A673 (cell line): ENCODE measurements at regions of chr12 and their contacts with region 1.

Region 1: GRCh38 chr12:11486623-11487444 is 91.5 kb upstream of the PRB2 start:
- DNase-seq: peak; percentile 93
- H3K4me3 ChIP-seq: no peak overlapping the region
- H3K27ac ChIP-seq: no peak overlapping the region
- H3K4me1 ChIP-seq: no peaks in the 10 kb centered on the region
- H3K27me3 ChIP-seq: no peaks in the 10 kb centered on the region
- CTCF ChIP-seq: peak; percentile 99

Region 2: GRCh38 chr12:10771132-10771733 is 715.6 kb before region 1 on chr12:
- CTCF ChIA-PET with region 1: interaction called, 7 read pairs
- POLR2A ChIA-PET with region 1: no interaction called
- intact Hi-C with region 1: loop called (anchors 1 kb)
- DNase-seq: peak; percentile 59
- H3K4me3 ChIP-seq: no peak overlapping the region
- H3K27ac ChIP-seq: no peak overlapping the region
- H3K4me1 ChIP-seq: no peaks in the 10 kb centered on the region
- H3K27me3 ChIP-seq: peaks cover 29% of the 10 kb centered on the region
- CTCF ChIP-seq: peak; percentile 76

Region 3: DNA sequence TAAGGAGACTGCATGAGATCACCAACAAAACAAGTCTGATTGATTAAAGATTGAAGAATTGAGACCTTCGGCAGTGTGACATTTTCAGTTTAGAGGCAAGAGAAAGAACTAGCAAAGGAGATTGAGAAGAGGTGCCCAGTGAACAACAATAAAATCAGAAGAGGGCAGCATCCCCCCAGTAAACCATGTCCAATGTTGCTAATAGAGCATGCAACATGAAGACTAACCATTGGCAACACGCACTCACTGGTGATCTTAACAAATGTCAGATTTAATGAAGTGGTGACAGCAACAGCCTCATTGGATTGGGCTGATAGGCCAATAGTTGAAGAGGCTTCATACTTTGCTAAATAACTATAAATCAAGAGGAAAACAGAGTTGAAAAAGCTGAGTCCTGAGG is 527.0 kb before region 1 on chr12:
- CTCF ChIA-PET with region 1: no interaction called
- POLR2A ChIA-PET with region 1: no interaction called
- intact Hi-C with region 1: loop called (anchors 10 kb)
- DNase-seq: peak; percentile 10
- H3K4me3 ChIP-seq: no peak overlapping the region
- H3K27ac ChIP-seq: no peak overlapping the region
- H3K4me1 ChIP-seq: no peaks in the 10 kb centered on the region
- H3K27me3 ChIP-seq: no peaks in the 10 kb centered on the region
- CTCF ChIP-seq: peak; percentile 32

Region 4: DNA sequence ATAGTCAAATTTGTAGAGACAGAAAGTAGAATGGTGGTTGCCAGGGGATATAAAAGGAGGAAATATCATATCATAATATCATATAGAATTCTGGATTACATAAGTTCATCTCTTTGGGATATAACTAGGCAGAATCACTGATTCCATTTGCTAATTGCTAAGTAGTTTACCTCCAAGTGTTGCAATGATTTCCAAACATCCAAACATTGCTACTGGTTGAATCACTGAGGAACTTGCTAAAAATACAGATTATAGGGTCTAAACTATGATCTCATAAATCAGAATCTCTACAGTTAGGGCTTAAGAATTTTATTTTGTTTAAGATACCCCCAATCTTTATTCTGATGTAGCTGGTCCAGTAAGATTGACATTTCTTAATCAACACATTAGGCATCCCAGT is 284.0 kb before region 1 on chr12:
- CTCF ChIA-PET with region 1: no interaction called
- POLR2A ChIA-PET with region 1: no interaction called
- intact Hi-C with region 1: loop called (anchors 1 kb)
- DNase-seq: peak; percentile 16
- H3K4me3 ChIP-seq: no peak overlapping the region
- H3K27ac ChIP-seq: peak overlapping the region; percentile 33
- H3K4me1 ChIP-seq: peaks cover 19% of the 10 kb centered on the region
- H3K27me3 ChIP-seq: no peaks in the 10 kb centered on the region
- CTCF ChIP-seq: no peak

Region 5: GRCh38 chr12:11228296-11228879 is 258.4 kb before region 1 on chr12:
- CTCF ChIA-PET with region 1: interaction called, 6 read pairs
- POLR2A ChIA-PET with region 1: no interaction called
- intact Hi-C with region 1: loop called (anchors 1 kb)
- DNase-seq: peak; percentile 73
- H3K4me3 ChIP-seq: no peak overlapping the region
- H3K27ac ChIP-seq: no peak overlapping the region
- H3K4me1 ChIP-seq: no peaks in the 10 kb centered on the region
- H3K27me3 ChIP-seq: no peaks in the 10 kb centered on the region
- CTCF ChIP-seq: peak; percentile 77